WTC11 (cell line): ENCODE measurements at regions of chr9 and their contacts with region 1.

Region 1: GRCh38 chr9:120730661-120731514 is 16.6 kb upstream of the MEGF9 start:
- DNase-seq: no peak
- ATAC-seq: peak; percentile 52
- H3K4me3 Mint-ChIP-seq: no peak overlapping the region
- H3K27ac Mint-ChIP-seq: no peak overlapping the region
- H3K4me1 Mint-ChIP-seq: peaks cover 5% of the 10 kb centered on the region; the same call in 1 of the 2 replicates
- H3K27me3 Mint-ChIP-seq: peaks cover 2% of the 10 kb centered on the region
- CTCF ChIP-seq: no peak

Region 2: DNA sequence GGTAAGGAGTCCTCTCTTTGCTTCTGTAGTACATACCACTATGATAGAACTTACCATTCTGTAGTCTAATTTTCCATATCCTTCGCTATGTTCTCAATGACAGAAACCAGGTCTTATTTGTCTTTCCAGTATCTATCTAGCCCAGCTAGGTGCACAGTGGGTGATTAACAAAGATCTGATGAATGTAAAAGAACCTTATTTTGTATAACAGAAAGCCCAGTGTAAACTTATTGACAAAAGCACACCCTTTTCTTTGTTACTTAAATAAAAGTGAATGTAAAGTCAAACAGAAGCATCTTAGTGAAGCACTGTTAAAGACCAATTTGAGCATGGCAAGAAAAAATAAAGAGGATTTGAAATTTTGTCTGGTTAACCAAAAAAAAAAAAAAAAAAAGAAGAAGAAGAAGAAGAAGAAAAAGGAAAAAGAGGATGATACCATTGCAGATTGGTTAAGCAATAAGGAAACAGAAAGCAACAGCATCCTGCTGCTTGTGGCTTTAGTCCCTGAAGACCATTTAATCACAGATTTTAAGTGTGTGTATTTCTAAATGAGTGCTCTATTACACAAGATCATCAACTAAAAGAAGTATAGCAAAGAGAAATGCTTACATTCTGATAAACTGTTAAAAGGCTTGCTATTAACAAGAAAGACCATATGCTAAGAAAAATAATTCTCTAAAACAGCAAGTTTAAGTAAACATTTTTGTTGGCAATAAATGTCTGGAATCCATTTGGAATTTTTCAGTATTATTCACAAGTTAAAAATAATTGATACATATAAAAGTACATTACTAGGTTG is 37.8 kb before region 1 on chr9:
- CTCF ChIA-PET with region 1: no interaction called
- POLR2A ChIA-PET with region 1: no interaction called
- DNase-seq: no peak
- ATAC-seq: peak; percentile 60; the same call in 1 of the 2 replicates
- H3K4me3 Mint-ChIP-seq: no peak overlapping the region
- H3K27ac Mint-ChIP-seq: no peak overlapping the region
- H3K4me1 Mint-ChIP-seq: peaks cover 5% of the 10 kb centered on the region
- H3K27me3 Mint-ChIP-seq: no peaks in the 10 kb centered on the region
- CTCF ChIP-seq: no peak

Region 3: DNA sequence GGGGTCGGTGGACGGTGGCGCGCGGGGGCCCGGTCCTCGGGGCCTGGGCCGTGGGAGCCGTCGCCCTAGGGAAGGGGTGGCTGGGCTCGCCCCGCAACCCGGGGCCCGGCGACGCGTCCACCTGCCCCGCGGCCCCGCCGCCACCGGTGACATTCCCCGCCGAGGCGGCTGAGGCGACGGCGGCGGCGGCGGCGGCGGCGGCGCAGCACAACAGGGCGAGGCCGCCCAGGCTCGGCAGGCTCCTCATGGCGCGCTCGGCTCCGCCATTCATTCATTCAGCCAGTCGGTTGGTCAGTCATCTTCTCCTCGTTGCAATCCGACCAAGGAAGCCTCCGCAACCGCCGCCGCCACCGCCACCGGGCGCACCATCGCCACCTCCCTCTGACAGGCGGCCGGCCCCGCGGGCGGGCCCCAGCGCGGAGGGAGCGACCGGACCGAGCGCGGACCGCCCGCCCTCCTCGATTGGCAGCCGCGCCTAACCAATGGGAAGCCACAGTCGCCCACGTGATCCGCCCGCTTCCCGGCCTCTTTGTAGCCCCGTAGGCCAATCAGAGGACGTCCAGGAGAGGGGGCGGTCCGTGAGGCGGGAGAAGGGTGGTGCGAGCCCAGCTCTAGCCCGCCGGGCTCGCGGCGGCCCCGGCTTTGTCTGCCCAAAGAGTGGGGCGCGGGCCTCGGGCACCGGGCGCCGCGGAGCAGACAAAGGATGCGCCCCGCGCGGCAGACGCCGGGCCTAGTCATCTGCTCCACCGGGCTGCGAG is 16.6 kb before region 1 on chr9 and contains the start of gene MEGF9:
- CTCF ChIA-PET with region 1: interaction called, 46 read pairs
- POLR2A ChIA-PET with region 1: no interaction called
- DNase-seq: peak; percentile 97
- ATAC-seq: peak; percentile 97
- H3K4me3 Mint-ChIP-seq: peak within 1 kb of the TSS; percentile 76
- H3K27ac Mint-ChIP-seq: no peak within 1 kb of the TSS
- H3K4me1 Mint-ChIP-seq: peaks cover 17% of the 10 kb centered on the region
- H3K27me3 Mint-ChIP-seq: peaks cover 50% of the 10 kb centered on the region
- CTCF ChIP-seq: no peak
- total RNA-seq, gene MEGF9: 0.80 to 1.0 TPM (median 0.92 TPM) in 3 replicates

Region 4: GRCh38 chr9:120755827-120756434 is 25.0 kb after region 1 on chr9:
- CTCF ChIA-PET with region 1: interaction called, 13 read pairs
- POLR2A ChIA-PET with region 1: no interaction called
- DNase-seq: peak; percentile 67
- ATAC-seq: peak; percentile 74
- H3K4me3 Mint-ChIP-seq: no peak overlapping the region
- H3K27ac Mint-ChIP-seq: no peak overlapping the region
- H3K4me1 Mint-ChIP-seq: no peaks in the 10 kb centered on the region
- H3K27me3 Mint-ChIP-seq: no peaks in the 10 kb centered on the region
- CTCF ChIP-seq: peak; percentile 84